Activated CD8-positive, alpha-beta T cell treated with anti-CD3 and anti-CD28 coated beads for 36 hours (primary cell): ENCODE measurements at regions of chr15 and their contacts with region 1.

Region 1: GRCh38 chr15:101447561-101448071 is 41.9 kb downstream of the PCSK6 start:
- DNase-seq: no peak
- ATAC-seq: no peak
- H3K4me3 Mint-ChIP-seq: no peak overlapping the region
- H3K27ac Mint-ChIP-seq: no peak overlapping the region
- H3K4me1 Mint-ChIP-seq: peaks cover 19% of the 10 kb centered on the region
- H3K27me3 Mint-ChIP-seq: peaks cover 10% of the 10 kb centered on the region
- CTCF ChIP-seq: no peak

Region 2: GRCh38 chr15:101391981-101392640 is 55.5 kb before region 1 on chr15:
- CTCF ChIA-PET with region 1: no interaction called
- POLR2A ChIA-PET with region 1: no interaction called
- intact Hi-C with region 1: no loop called
- DNase-seq: no peak
- ATAC-seq: peak; percentile 24
- H3K4me3 Mint-ChIP-seq: peak overlapping the region; percentile 32
- H3K27ac Mint-ChIP-seq: no peak overlapping the region
- H3K4me1 Mint-ChIP-seq: peaks cover 6% of the 10 kb centered on the region
- H3K27me3 Mint-ChIP-seq: peaks cover 5% of the 10 kb centered on the region
- CTCF ChIP-seq: no peak

Region 3: DNA sequence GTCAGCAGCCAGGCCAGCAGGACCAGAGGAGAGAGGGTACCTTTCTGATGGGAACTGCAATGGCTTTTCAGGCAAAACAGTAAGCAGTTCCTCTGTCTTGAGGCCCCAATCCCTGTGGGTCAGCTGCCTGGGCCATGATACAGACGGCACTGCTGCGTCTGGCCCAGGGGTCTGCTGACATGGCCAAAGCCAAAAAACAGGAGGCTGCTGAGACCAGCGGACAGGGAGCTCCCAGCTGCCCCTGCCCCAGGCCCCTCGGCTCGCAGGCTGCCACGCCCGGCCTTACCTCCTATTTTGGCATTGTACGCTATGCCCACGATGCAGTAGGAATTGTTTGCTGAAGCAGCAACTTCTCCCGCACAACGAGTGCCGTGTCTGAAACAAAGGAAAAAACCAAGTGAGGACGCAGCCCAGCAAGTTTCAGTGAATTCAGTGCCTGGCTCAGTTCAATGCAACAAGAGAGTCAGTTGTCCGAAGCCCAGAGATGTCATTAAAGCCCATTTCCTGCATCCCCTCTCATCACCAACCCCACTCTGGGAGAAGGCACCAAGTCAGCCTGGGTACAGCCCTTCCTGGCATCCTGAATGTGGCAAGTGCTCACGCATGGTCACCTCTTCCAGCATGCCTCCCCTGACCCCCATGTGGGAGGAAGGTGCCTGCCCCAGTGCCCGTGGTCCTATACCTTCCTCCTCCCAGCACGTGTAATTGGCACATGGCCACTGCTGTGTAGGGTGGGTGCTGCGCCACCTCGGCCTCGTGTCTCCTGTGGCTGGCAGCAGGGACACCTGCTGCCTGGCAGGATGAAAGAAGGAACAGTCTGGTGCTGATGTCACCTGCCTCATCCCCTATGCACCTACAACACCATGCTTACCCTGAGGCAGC is 19.8 kb before region 1 on chr15:
- CTCF ChIA-PET with region 1: no interaction called
- POLR2A ChIA-PET with region 1: no interaction called
- intact Hi-C with region 1: loop called (anchors 2 kb)
- DNase-seq: no peak
- ATAC-seq: no peak
- H3K4me3 Mint-ChIP-seq: no peak overlapping the region
- H3K27ac Mint-ChIP-seq: no peak overlapping the region
- H3K4me1 Mint-ChIP-seq: no peaks in the 10 kb centered on the region
- H3K27me3 Mint-ChIP-seq: peaks cover 2% of the 10 kb centered on the region
- CTCF ChIP-seq: no peak